ENCODE measurements at regions of chr5 and their contacts with region 1.

Region 1: GRCh38 chr5:102755686-102756371 is 724 bp downstream of the PAM start:
- DNase-seq: peak; percentile 88
- ATAC-seq: peak; percentile 70
- H3K4me3 ChIP-seq: peak overlapping the region; percentile 88
- H3K27ac ChIP-seq: peak overlapping the region; percentile 6; the same call in 1 of the 2 replicates
- H3K4me1 ChIP-seq: peaks cover 25% of the 10 kb centered on the region
- H3K27me3 ChIP-seq: no peaks in the 10 kb centered on the region
- CTCF ChIP-seq: no peak

Region 2: DNA sequence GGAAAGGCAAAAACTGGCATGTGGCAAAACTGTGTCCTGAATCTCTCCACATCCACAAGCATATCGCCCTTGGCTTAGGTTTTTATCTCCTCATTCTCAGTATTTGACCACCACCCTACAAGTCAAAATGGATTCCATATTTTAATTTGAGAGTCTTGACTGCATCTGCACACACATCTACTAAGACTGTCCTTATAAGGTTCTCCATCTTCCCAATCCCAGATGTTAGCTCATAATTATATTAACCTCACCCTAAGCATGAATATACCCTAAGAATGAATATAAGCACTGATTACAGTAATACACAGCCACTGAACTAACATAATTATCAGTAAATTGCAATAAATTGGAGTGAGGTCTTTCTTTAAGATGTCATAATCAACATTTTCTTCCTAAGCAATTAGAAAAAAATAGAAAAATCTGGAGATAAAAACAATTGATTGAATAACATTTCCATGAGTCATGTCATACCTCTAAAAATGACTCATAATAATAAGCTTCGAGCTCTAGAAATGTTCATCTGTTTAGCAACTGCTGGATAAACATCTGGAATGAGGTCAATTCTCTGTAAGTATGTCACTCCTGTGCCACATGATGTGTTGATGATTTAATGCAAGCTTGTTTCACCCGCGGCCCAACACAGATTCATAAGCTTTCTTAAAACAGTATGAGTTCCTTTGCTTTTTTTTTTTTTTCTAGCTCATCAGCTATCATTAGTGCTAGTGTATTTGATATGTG is 40.6 kb before region 1 on chr5:
- CTCF ChIA-PET with region 1: no interaction called
- POLR2A ChIA-PET with region 1: no interaction called
- intact Hi-C with region 1: loop called (anchors 2 kb)
- DNase-seq: peak; percentile 84
- ATAC-seq: peak; percentile 42
- H3K4me3 ChIP-seq: no peak overlapping the region
- H3K27ac ChIP-seq: no peak overlapping the region
- H3K4me1 ChIP-seq: peaks cover 39% of the 10 kb centered on the region
- H3K27me3 ChIP-seq: no peaks in the 10 kb centered on the region
- CTCF ChIP-seq: no peak

Region 3: DNA sequence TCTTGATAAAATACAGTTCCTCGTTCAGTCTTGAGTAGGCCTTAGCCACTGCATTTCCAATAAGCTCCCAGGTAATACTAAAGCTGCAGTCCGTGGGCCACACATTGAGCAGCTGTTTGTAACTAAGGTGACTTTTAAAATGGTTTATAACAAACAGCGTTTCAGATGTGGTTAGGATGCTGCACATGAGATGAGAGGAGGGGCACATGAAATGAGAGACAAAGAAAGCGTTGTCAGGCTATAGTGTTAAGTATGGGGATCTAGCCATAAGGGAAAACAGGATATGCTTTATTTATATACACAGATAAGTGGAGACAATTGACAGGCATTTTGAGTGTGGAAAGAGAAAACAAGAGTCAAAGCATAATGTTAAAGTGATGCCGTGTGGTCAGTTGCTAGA is 89.2 kb after region 1 on chr5:
- CTCF ChIA-PET with region 1: no interaction called
- POLR2A ChIA-PET with region 1: no interaction called
- intact Hi-C with region 1: no loop called
- DNase-seq: no peak
- ATAC-seq: no peak
- H3K4me3 ChIP-seq: no peak overlapping the region
- H3K27ac ChIP-seq: no peak overlapping the region
- H3K4me1 ChIP-seq: no peaks in the 10 kb centered on the region
- H3K27me3 ChIP-seq: no peaks in the 10 kb centered on the region
- CTCF ChIP-seq: no peak

Region 4: DNA sequence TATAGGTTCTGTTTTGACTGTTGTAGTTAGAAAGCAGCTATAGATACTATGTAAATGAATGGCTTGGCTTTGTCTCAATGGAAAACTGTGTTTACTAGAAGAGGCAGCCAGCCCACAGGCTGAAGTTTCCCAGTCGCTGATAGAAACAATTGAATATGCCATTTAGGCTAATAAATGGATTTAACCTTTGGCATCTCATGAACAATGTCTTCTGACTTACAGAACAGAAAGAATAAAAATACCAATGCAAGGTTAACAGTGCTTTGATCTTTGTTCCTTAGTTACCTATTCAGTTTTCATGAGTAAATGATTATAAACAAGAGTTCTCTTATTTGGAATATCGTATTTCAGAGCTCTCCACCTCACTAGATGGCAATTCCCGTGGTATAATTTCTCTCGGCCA is 119.9 kb after region 1 on chr5:
- CTCF ChIA-PET with region 1: no interaction called
- POLR2A ChIA-PET with region 1: no interaction called
- intact Hi-C with region 1: no loop called
- DNase-seq: no peak
- ATAC-seq: no peak
- H3K4me3 ChIP-seq: no peak overlapping the region
- H3K27ac ChIP-seq: no peak overlapping the region
- H3K4me1 ChIP-seq: peaks cover 7% of the 10 kb centered on the region
- H3K27me3 ChIP-seq: no peaks in the 10 kb centered on the region
- CTCF ChIP-seq: no peak

Region 5: GRCh38 chr5:103258957-103259704 is 503.3 kb after region 1 on chr5:
- CTCF ChIA-PET with region 1: no interaction called
- POLR2A ChIA-PET with region 1: no interaction called
- intact Hi-C with region 1: no loop called
- DNase-seq: peak; percentile 65
- ATAC-seq: peak; percentile 47
- H3K4me3 ChIP-seq: peak overlapping the region; percentile 93
- H3K27ac ChIP-seq: peak overlapping the region; percentile 63
- H3K4me1 ChIP-seq: peaks cover 35% of the 10 kb centered on the region
- H3K27me3 ChIP-seq: no peaks in the 10 kb centered on the region
- CTCF ChIP-seq: no peak